ENCODE measurements at regions of chr7 and their contacts with region 1.

Region 1: GRCh38 chr7:111987115-111987826 is 218.9 kb downstream of the DOCK4 start:
- DNase-seq: peak; percentile 62
- H3K4me3 ChIP-seq: no peak overlapping the region
- H3K27ac ChIP-seq: peak overlapping the region; percentile 51
- H3K4me1 ChIP-seq: peaks cover 13% of the 10 kb centered on the region
- H3K27me3 ChIP-seq: no peaks in the 10 kb centered on the region
- CTCF ChIP-seq: no peak

Region 2: DNA sequence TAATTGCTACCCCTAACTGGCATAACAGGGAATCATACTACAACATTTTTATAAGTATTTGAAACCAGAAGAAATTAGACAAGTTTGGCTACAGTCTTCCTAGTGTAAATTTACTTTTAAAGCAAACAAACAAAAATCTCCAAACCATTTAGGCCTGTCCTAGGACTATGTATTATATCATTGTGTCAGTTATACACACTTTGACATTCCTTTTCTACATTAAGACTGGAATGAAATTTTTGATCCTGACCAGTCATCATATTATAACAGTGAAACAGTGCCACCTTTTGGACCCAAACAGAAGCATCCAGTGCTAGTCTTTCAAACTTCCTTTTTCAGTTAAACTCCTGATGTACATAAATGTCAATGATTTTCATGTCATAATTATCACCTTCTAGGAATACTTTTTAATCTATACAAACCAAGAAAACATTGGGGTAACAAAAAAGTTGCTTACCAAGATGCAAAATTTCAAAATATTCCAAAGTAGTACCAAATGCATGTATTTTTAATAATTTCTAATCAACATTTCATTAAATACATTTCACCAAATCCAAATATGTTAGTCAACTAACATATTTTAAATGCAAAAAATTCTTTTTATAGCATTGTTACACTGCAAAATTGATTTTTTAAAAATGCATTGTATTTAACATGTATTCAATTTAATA is 500.7 kb before region 1 on chr7:
- CTCF ChIA-PET with region 1: no interaction called
- POLR2A ChIA-PET with region 1: no interaction called
- intact Hi-C with region 1: no loop called
- DNase-seq: peak; percentile 67
- H3K4me3 ChIP-seq: no peak overlapping the region
- H3K27ac ChIP-seq: no peak overlapping the region
- H3K4me1 ChIP-seq: peaks cover 8% of the 10 kb centered on the region
- H3K27me3 ChIP-seq: no peaks in the 10 kb centered on the region
- CTCF ChIP-seq: peak; percentile 80

Region 3: DNA sequence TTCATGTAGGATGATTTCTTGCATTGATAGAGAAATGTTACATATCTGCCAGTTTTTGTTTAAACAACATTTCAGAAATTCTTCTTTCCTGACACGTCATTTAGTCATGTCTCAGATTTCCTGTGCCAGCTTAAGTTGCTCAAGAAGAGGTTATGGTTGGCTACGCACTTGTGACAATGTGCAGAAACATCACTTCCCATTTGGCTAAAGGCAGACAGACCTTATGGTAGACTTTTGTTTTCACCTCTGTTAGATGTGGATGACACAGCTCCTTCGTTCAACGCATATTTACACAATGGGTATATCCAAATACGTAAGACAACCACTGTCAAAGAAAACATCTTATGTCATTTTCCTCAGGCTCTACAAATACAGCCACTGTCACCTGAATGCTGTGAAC is 93.2 kb after region 1 on chr7:
- CTCF ChIA-PET with region 1: no interaction called
- POLR2A ChIA-PET with region 1: no interaction called
- intact Hi-C with region 1: loop called (anchors 5 kb)
- DNase-seq: peak; percentile 64
- H3K4me3 ChIP-seq: no peak overlapping the region
- H3K27ac ChIP-seq: peak overlapping the region; percentile 79
- H3K4me1 ChIP-seq: peaks cover 63% of the 10 kb centered on the region
- H3K27me3 ChIP-seq: no peaks in the 10 kb centered on the region
- CTCF ChIP-seq: no peak